ENCODE measurements at regions of chr19 and their contacts with region 1.

Region 1: DNA sequence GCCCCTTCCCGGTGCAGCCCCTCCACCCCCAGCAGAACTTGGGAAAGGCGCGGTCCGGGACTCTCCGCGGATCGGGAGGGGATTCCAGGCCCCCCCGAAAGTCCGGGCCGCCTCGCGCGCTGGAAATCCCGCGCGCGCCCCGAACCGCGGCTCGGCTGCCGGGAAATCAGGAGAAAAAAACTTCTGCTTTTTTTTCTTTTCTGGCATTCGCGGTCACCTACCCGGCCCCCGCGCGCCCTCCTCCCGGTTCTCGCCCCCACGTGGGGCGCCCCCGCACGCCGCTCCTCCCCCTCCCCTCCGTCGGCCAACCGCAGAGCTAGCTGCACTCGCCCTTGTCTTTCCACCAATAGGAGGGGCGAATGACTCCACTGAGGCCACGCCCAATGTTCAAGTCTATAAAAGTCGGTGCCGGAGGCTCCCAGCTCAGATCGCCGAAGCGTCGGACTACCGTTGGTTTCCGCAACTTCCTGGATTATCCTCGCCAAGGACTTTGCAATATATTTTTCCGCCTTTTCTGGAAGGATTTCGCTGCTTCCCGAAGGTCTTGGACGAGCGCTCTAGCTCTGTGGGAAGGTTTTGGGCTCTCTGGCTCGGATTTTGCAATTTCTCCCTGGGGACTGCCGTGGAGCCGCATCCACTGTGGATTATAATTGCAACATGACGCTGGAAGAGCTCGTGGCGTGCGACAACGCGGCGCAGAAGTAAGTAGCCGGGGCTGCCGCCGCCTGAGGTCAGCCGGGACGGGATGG is at the start of gene GADD45B:
- DNase-seq: peak; percentile 99

Region 2: GRCh38 chr19:2345794-2346663 is 129.8 kb before region 1 on chr19:
- CTCF ChIA-PET with region 1: no interaction called
- POLR2A ChIA-PET with region 1: no interaction called
- DNase-seq: no peak

Region 3: DNA sequence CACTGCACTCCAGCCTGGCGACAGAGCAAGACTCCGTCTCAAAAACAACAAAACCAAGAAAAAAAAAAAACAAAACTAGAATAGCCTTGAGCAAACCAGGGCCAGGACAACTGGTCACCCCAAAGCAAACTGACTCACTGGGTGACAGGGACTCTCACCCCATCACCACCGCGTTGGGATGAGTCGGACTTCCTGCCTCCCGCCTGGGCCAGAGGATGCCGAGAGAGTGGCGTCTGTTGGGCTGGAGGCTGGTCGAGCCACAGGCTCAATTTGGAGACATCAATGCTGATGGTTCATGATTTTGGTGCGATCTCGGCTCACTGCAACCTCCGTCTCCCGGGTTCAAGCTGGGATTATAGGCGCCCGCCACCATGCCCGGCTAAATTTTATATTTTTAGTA is 104.2 kb before region 1 on chr19:
- CTCF ChIA-PET with region 1: no interaction called
- POLR2A ChIA-PET with region 1: no interaction called
- DNase-seq: no peak

Region 4: GRCh38 chr19:2427429-2428320 is 48.2 kb before region 1 on chr19 and contains the start of gene TIMM13:
- CTCF ChIA-PET with region 1: interaction called, 3 read pairs
- POLR2A ChIA-PET with region 1: interaction called, 11 read pairs
- DNase-seq: peak; percentile 95

Region 5: DNA sequence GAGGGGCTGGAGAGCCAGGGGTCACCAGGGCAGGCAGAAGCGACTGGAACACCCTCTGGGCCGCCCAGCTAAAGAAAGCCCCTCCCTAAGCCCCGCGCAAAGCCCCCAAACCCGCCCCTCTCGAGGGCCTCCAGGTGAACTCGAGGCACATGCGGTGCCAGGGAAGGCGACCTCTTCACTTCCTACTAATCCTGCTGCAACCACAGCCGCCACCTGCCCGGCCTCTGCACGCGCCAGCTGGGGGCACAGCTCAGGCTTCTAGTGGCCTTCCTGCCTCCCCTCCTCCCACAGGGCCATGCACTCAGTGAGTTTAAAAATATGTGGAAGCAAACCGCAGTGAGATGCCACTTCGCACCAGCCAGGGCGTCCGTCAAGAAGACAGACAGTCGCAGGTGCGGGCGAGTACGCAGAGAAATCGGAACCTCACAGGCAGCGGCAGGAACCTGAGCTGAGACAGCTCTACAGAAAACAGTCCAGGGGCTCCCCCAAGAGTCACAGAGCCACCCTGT is 29.6 kb before region 1 on chr19:
- CTCF ChIA-PET with region 1: no interaction called
- POLR2A ChIA-PET with region 1: no interaction called
- DNase-seq: no peak

Region 6: GRCh38 chr19:2487842-2488241 is 12.0 kb after region 1 on chr19:
- CTCF ChIA-PET with region 1: no interaction called
- POLR2A ChIA-PET with region 1: interaction called, 64 read pairs
- DNase-seq: no peak

Region 7: DNA sequence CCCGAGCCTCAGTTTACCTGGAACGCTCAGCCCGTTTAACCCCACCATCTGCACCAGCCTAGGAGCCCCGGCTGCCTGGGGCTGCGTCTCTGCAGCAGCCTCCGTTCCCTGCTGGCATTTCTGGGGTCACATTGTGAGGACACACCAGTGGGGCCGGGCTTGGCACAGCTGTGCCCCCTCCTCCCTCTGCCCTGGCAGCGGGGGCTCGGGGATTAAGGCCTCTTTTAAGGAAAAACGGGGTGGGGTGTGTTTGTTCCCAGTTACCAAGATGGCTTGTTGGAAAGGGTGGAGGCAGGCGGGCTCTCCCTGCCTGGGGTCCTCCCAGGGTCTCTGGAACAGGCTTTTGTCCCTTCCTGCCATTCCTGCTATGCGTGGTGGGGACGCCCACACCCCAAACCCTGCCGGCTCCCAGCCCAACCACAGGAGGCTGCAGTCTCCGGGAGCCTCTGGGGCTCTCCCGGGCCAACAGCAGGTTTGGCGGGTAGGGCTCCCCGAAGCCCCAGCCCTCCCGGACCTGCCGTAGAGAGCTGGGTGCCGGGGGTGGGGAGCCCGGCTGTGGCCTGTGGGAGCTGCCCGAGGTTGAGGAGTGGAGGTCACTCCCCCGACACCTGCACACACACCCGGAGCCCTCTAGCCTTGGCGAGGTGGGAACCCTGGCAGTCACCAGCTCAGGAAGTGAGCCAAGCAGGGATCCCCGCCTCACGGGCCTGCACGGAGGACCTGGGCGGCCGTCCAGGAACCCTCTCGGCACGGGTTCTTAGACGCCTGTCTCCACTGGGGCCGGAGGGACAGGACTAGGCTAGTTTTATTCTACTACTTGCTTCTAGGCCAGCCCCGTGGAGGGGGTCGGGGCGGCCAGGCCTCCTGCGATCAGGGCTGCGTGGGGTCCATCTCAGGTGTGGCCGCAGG is 36.9 kb after region 1 on chr19:
- CTCF ChIA-PET with region 1: no interaction called
- POLR2A ChIA-PET with region 1: interaction called, 24 read pairs
- DNase-seq: no peak

Region 8: DNA sequence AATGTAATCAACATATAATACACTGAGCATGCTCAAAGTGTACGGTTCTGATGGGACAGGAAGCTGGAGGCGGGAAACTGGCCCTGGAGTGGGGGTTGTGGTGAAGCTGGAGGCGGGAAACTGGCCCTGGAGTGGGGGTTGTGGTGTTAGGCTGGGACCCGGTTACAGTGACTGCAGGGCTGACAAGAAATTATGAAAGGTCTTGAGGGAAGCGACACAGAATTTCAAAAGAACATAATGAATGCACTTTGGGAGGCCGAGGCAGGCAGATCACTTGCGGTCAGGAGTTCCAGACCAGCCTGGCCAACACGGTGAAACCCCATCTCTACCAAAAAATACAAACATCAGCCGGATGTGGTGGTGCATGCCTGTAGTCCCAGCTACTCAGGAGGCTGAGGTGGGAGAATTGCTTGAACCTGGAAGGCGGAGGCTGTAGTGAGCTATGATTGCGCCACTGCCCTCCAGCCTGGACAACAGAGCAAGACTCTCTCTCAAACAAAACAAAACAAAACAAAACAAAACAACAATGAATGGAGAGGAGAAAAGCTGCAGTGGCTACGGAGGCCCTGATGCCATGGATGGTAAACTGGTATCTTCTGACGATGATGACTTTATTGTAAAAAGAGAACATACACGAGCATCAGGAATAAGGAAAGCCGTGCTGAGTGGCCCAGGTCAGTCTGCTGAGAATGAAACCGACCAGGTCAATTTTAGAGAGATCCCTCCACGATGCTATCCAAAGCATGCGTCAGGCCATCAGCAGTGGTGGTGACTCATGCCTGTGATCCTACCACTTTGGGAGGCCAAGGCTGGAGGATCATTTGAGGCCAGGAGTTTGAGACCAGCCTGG is 61.9 kb after region 1 on chr19:
- CTCF ChIA-PET with region 1: interaction called, 5 read pairs
- POLR2A ChIA-PET with region 1: interaction called, 122 read pairs
- DNase-seq: no peak

Region 9: DNA sequence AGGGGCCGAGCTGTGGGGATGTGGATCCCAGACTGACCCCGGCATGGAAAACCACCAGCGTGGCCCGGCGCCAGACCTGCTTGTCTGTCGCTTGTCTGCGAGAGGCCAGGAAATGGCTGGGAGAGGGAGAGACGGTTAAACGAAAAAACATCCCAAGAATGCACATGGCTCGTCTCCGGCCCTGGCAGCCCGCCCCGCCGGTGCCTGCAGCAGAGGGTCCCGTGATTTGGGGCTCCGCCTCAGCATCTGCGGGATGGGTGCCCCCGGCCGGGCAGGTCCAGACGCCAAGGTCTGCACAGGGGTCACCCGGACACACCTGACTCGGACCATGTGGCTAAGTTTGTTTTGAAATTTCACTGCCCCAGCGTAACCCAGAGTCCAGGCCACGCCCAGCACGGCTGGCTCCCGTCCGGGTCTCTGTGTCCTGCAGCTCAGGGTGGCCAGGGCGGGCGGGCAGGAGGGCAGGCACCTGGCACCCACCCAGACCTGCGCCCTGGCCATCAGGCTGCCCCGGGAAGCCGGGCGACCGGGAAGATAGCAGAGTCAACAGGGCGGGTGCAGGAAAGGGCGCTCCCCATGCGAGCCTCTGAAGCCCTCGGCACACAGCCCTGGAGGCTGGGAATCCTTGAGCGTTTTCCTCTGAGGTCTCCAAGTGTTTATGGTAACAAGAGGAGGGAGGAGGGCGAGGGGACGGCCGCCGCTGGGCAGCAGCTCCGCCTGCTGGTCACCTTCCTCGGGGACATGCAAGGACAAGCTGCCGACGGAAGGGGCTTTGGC is 103.2 kb after region 1 on chr19:
- CTCF ChIA-PET with region 1: interaction called, 6 read pairs
- POLR2A ChIA-PET with region 1: interaction called, 151 read pairs
- DNase-seq: peak; percentile 80

Region 10: DNA sequence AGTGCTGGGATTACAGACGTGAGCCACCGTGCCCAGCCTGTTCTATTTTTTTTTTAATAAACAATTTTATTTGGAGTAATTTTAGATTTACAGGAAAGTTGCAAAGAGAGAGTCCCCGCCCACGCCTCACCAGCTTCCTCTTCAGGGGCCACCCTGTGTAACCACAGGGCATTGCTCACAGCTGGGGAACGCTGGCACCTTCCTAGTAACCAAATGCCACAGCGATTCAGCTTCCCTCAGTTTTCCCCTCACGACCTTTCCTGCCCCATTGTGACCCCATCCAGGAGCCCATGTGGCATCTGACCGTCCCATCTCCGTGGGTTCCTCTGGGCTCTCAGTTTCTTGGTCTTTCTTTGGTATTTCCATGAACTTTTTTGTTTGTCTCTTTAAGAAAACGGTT is 142.7 kb after region 1 on chr19:
- CTCF ChIA-PET with region 1: no interaction called
- POLR2A ChIA-PET with region 1: interaction called, 23 read pairs
- DNase-seq: no peak

Measured in HEK293T (cell line).